Head of caudate nucleus (tissue), 42 donors: ENCODE measurements at regions of chr3 and their contacts with region 1.

Region 1: GRCh38 chr3:148727247-148727646 is 29.5 kb downstream of the AGTR1 start:
- DNase-seq: peak; percentile 60 to 92 (median 78)

Region 2: GRCh38 chr3:148657470-148657869 is 69.8 kb before region 1 on chr3:
- intact Hi-C with region 1: no loop called
- DNase-seq: no peak

Region 3: DNA sequence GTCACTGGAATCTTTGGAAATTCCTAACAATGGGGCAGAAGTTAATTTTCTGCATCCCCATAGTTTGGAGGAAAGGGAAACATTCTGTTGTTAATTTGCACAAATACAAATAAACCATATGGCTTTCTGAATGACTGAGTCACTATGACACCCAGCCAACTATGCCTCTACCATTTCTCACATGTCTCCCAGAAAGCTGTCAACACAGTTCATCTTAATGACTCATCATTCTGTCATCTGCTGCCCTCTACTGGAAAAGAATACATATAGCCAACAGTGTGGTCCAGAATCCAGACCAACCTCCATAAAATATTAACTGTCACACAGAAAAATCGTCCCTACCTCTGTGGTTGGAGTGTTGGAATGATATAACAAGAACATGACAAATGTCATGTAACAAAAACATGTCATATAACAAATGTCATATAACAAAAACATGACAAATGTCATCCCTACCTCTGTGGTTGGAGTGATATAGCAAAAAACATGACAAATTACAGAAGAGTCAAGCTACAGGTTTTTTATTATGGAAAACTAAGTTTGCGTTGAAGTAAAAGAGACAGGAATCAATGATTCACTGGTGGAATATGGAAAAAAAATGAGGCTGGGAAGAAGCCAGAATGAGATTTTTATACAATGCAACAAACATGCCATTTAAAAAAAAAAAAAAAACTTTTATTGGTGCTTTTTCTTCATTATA is 216.4 kb after region 1 on chr3:
- intact Hi-C with region 1: loop called (anchors 5 kb)
- DNase-seq: peak in 15 of 42 donors; percentile 25 to 79 (median 60)